ACHN (cell line): ENCODE measurements at regions of chr7 and their contacts with region 1.

Region 1: DNA sequence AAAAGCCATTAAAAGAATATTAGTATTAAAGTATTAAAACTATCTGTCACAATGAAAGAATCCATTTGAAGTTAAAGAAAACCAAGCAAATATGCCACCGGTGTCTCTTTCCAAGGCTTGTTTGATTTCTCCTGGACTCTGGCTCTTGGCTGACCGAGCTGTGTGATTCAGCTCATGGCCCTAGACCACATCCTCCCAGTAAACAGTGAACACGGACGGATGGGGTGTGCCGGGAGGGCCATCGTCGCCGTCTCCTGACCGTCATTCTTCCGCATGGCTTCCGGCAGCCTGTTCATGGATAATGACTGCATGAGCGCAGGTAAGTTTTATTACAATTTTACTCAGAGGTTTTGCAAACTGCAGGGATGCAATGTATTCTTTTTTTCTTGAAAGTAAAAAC is 218.5 kb downstream of the DNAJB6 start:
- DNase-seq: no peak

Region 2: DNA sequence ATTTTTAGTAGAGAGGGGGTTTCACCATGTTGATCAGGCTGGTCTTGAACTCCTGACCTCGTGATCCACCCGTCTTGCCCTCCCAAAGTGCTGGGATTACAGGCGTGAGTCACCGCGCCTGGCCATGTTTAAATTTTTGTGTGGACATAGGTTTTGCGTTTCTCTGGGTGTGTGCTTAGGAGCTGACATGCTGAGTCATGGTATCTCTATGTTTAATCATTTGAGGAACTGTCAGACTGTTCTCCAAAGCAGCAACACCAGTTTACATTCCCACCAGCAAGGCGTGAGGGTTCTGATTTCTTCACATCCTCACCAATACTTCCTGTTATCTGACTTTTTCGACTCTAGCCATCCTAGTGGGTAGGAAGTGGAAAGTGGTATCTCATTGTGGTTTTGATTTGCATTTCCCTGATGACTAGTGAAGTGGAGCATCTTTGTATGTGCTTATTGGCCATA is 64.8 kb before region 1 on chr7:
- in situ Hi-C with region 1: loop called (anchors 10 kb)
- DNase-seq: peak; percentile 41

Region 3: GRCh38 chr7:158302274-158303070 is 747.2 kb after region 1 on chr7:
- in situ Hi-C with region 1: no loop called
- DNase-seq: no peak